Body of pancreas (tissue), 4 donors: ENCODE measurements at regions of chr9 and their contacts with region 1.

Region 1: DNA sequence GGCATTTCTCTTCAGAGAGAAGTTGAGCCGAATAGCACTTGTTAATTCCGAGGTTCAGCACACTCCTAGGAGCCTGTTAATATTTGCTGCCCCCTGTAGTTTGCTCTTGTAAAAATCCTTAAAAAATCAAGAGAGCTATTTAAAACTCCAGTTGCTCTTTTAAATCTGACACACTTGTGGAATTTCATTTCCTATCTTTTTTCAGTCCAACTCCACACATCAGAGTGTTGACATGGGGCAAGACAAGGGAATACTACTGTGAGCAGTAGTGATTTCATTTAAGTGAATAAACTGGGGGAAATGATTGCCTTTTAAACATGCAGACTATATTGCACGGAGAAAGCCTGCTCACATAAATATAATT is 1096.3 kb upstream of the DMAC1 start:
- DNase-seq: peak in 1 of 4 donors; percentile 3
- ATAC-seq: peak; percentile 67
- H3K4me3 ChIP-seq: no peak overlapping the region
- H3K27ac ChIP-seq: no peak overlapping the region
- H3K4me1 ChIP-seq: peaks cover 4% of the 10 kb centered on the region
- H3K27me3 ChIP-seq: no peaks in the 10 kb centered on the region
- CTCF ChIP-seq: peak; percentile 36 to 74 (median 58)
- POLR2A ChIP-seq: no peak

Region 2: GRCh38 chr9:7570107-7570720 is 1325.6 kb before region 1 on chr9:
- intact Hi-C with region 1: loop called (anchors 10 kb)
- DNase-seq: peak; percentile 58 to 70 (median 61)
- ATAC-seq: peak; percentile 35
- H3K4me3 ChIP-seq: no peak overlapping the region
- H3K27ac ChIP-seq: no peak overlapping the region
- H3K4me1 ChIP-seq: no peaks in the 10 kb centered on the region
- H3K27me3 ChIP-seq: no peaks in the 10 kb centered on the region
- CTCF ChIP-seq: peak; percentile 64 to 77 (median 71)
- POLR2A ChIP-seq: no peak

Region 3: DNA sequence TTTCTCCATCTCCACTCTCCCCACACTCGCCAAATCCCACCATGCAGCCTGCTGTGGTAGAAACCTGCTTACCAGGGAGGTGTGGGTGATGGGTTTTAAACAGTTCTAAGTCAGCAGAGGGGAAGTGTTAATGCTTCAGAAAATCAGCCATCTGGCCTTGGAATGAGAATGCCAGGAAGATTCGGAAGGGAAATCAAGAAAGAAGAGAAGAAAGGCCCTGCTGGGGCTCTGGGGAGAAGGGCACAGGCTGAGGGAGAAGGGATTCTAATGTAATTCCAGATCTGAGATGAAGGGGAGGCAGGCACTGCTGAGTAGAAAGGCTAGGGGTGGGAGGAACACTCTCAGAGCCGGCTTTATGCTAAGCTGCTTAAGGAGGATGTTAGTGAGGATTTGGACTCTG is 661.5 kb before region 1 on chr9:
- intact Hi-C with region 1: no loop called
- DNase-seq: no peak
- ATAC-seq: no peak
- H3K4me3 ChIP-seq: no peak overlapping the region
- H3K27ac ChIP-seq: no peak overlapping the region
- H3K4me1 ChIP-seq: no peaks in the 10 kb centered on the region
- H3K27me3 ChIP-seq: no peaks in the 10 kb centered on the region
- CTCF ChIP-seq: no peak
- POLR2A ChIP-seq: no peak

Region 4: GRCh38 chr9:8684978-8685708 is 210.7 kb before region 1 on chr9:
- intact Hi-C with region 1: no loop called
- DNase-seq: no peak
- ATAC-seq: no peak
- H3K4me3 ChIP-seq: no peak overlapping the region
- H3K27ac ChIP-seq: no peak overlapping the region
- H3K4me1 ChIP-seq: no peaks in the 10 kb centered on the region
- H3K27me3 ChIP-seq: no peaks in the 10 kb centered on the region
- CTCF ChIP-seq: no peak
- POLR2A ChIP-seq: no peak